Activated CD4-positive, alpha-beta T cell treated with anti-CD3 and anti-CD28 coated beads, Interleukin-2, amount 10 ng/mL, durations not matched to agents 24 days and 14 days (primary cell): ENCODE measurements at regions of chr12 and their contacts with region 1.

Region 1: DNA sequence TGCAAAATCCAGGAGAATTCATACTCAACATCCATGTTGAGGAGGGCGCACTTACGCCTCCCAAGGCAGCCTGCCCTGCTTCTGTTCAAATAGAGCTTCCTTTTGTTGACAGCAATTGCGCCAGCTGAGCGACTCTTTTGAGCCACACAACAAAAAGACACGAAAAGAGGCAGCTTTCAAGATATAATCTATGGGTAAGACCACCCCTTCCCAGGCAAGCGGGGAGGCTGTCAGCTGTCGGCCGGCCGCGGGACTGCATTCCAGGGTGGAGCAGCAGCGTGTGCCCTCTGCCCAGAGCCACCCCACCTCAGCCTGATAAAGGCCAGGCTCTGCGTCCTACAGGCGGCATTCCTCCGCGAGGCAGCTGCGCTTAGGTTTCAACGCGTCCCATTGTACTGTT is 15.8 kb upstream of the STAB2 start:
- DNase-seq: no peak
- H3K4me3 Mint-ChIP-seq: no peak overlapping the region
- H3K27ac Mint-ChIP-seq: no peak overlapping the region
- H3K4me1 Mint-ChIP-seq: peaks cover 3% of the 10 kb centered on the region
- H3K27me3 Mint-ChIP-seq: peaks cover 55% of the 10 kb centered on the region

Region 2: GRCh38 chr12:103077108-103077773 is 494.0 kb before region 1 on chr12:
- intact Hi-C with region 1: no loop called
- DNase-seq: no peak
- H3K4me3 Mint-ChIP-seq: no peak overlapping the region
- H3K27ac Mint-ChIP-seq: no peak overlapping the region
- H3K4me1 Mint-ChIP-seq: no peaks in the 10 kb centered on the region
- H3K27me3 Mint-ChIP-seq: no peaks in the 10 kb centered on the region

Region 3: GRCh38 chr12:103632554-103633216 is 61.4 kb after region 1 on chr12:
- intact Hi-C with region 1: loop called (anchors 2 kb)
- DNase-seq: peak; percentile 93
- H3K4me3 Mint-ChIP-seq: no peak overlapping the region
- H3K27ac Mint-ChIP-seq: no peak overlapping the region
- H3K4me1 Mint-ChIP-seq: no peaks in the 10 kb centered on the region
- H3K27me3 Mint-ChIP-seq: no peaks in the 10 kb centered on the region